PC-3 (cell line): ENCODE measurements at regions of chr14 and their contacts with region 1.

Region 1: GRCh38 chr14:79201550-79202207 is 1009.6 kb downstream of the DIO2 start:
- DNase-seq: peak; percentile 23
- ATAC-seq: peak; percentile 84
- H3K4me3 ChIP-seq: no peak overlapping the region
- H3K27ac ChIP-seq: no peak overlapping the region
- H3K4me1 ChIP-seq: no peaks in the 10 kb centered on the region
- H3K27me3 ChIP-seq: no peaks in the 10 kb centered on the region
- CTCF ChIP-seq: no peak

Region 2: DNA sequence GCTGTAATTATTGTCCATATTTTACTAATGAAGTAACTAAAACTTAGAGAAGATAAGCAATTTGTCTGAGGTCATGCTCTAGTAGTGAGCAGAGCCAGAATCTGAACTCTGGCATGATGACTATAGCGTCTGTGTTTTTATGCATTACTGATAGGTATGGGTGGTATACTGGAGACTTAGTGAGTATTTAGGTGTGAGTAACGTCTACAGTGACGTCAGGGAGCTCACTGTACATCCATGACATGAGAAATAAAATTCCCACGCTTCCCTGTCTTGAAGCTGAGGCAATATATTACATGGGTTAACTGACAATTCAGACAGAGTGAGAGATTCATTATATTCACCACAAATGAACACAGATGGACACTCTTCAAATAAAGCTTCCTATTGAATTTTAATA is 310.4 kb before region 1 on chr14:
- CTCF ChIA-PET with region 1: no interaction called
- POLR2A ChIA-PET with region 1: no interaction called
- intact Hi-C with region 1: no loop called
- DNase-seq: no peak
- ATAC-seq: no peak
- H3K4me3 ChIP-seq: no peak overlapping the region
- H3K27ac ChIP-seq: no peak overlapping the region
- H3K4me1 ChIP-seq: no peaks in the 10 kb centered on the region
- H3K27me3 ChIP-seq: peaks cover 18% of the 10 kb centered on the region; the same call in 1 of the 2 replicates
- CTCF ChIP-seq: no peak

Region 3: DNA sequence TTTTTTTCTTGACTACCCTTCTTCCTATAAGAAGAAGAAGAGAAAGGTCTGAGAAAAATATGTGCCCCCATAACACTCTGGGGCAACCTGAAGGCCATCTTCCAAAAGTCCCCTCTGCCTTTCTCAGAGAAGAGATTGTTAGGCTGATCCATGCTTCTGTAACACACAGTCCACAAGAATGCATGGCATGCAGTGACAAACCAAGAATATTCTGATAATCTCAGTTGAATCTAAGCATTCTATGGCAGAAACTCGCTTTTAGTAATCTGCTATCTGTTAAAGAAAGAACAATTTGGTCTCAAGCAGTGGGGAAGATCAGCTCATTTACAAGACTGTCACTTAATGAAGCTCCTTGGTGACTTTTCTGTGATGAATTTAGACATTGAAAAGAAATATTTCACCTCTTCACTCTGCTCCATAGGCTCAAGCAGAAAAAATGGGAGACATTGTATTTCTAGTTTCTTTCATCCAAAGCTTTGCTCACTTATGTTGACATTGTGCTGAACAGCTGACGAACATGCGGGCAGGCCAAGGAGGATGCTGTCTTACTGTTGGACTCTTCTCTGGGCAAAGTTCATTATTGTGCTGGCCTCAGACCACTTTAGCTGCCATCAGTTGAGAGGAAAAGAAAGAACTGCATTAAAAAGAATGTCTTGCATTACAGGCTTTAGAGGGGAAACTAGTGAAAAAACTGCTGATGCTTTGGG is 52.5 kb after region 1 on chr14:
- CTCF ChIA-PET with region 1: no interaction called
- POLR2A ChIA-PET with region 1: no interaction called
- intact Hi-C with region 1: no loop called
- DNase-seq: no peak
- ATAC-seq: no peak
- H3K4me3 ChIP-seq: no peak overlapping the region
- H3K27ac ChIP-seq: no peak overlapping the region
- H3K4me1 ChIP-seq: no peaks in the 10 kb centered on the region
- H3K27me3 ChIP-seq: no peaks in the 10 kb centered on the region
- CTCF ChIP-seq: no peak

Region 4: GRCh38 chr14:79411403-79412174 is 209.9 kb after region 1 on chr14:
- CTCF ChIA-PET with region 1: no interaction called
- POLR2A ChIA-PET with region 1: no interaction called
- intact Hi-C with region 1: loop called (anchors 5 kb)
- DNase-seq: peak; percentile 62
- ATAC-seq: peak; percentile 76
- H3K4me3 ChIP-seq: no peak overlapping the region
- H3K27ac ChIP-seq: peak overlapping the region; percentile 61
- H3K4me1 ChIP-seq: peaks cover 39% of the 10 kb centered on the region
- H3K27me3 ChIP-seq: no peaks in the 10 kb centered on the region
- CTCF ChIP-seq: no peak